Psoas muscle (tissue), 8 donors: ENCODE measurements at regions of chr5 and their contacts with region 1.

Region 1: GRCh38 chr5:54743997-54744788 is 226.6 kb downstream of the SNX18 start:
- DNase-seq: no peak
- ATAC-seq: peak in 3 of 4 donors; percentile 28 to 49 (median 40)
- H3K4me3 ChIP-seq: no peak overlapping the region
- H3K27ac ChIP-seq: peak overlapping the region; percentile 61
- H3K4me1 ChIP-seq: no peaks in the 10 kb centered on the region
- H3K27me3 ChIP-seq: no peaks in the 10 kb centered on the region
- CTCF ChIP-seq: no peak

Region 2: DNA sequence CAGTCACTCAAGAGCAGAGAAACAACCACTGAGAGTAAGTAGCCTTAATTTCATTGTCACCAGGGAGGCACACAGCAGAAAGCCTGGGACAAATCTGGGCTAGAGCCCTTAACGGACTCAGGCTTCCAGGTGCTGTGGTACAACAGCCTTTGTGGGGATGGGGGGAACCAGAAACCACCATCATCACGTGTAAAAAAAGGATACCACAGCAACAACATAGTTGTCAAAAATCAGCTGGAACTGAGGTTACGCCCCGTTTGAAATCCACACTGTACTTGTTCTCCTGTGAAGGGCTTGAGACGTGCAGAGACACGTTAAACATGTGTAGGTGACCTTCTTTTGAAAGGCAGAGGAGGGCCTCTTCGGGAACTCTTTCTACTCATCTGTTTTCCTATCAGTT is 807.2 kb after region 1 on chr5:
- intact Hi-C with region 1: loop called in 1 of 2 experiments (anchors 10 kb)
- DNase-seq: no peak
- ATAC-seq: no peak
- H3K4me3 ChIP-seq: no peak overlapping the region
- H3K27ac ChIP-seq: no peak overlapping the region
- H3K4me1 ChIP-seq: peaks cover 4% of the 10 kb centered on the region
- H3K27me3 ChIP-seq: no peaks in the 10 kb centered on the region
- CTCF ChIP-seq: no peak